ENCODE measurements at regions of chr20 and their contacts with region 1.

Region 1: GRCh38 chr20:58209652-58210397 is 18.6 kb downstream of the ANKRD60 start:
- DNase-seq: peak; percentile 92
- ATAC-seq: peak; percentile 96

Region 2: DNA sequence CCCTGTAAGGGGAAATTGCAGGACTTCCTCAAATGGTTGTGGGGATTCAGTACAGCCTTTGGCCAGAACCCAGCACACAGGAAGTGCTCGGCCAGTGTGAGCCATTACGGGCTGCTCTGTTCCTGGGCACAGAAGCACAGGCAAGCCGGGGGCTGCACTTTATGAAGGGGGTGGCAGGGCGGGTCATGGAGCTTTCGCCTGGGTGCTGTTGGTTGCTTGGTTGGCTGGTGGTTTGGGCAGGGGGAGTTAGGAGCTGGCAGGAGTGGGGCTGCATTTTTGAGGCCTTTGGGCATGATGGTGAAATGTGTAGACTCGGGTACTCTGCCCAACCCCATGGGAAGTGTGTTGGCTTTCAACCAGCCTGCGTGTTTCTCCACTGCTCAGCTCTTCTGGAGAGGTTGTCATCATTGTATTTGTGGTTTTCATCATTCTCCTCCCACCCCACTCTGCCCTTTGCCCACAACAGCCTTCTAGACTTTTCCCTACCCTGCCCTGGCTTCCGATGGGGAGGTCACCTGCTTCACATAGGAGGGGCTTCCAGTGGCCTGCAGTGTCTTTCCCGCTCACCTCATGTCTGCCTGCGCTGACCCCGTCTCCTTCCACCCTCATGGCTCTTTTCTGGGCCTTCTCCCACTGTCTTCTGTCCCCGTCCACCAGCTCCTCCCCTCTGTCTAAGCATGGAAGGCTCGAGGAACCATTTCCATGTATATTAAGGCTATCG is 834.7 kb before region 1 on chr20:
- intact Hi-C with region 1: loop called (anchors 10 kb)
- DNase-seq: peak; percentile 70
- ATAC-seq: peak; percentile 78

Region 3: GRCh38 chr20:57514273-57514751 is 695.5 kb before region 1 on chr20:
- intact Hi-C with region 1: loop called (anchors 5 kb)
- DNase-seq: peak; percentile 67
- ATAC-seq: peak; percentile 93

Region 4: DNA sequence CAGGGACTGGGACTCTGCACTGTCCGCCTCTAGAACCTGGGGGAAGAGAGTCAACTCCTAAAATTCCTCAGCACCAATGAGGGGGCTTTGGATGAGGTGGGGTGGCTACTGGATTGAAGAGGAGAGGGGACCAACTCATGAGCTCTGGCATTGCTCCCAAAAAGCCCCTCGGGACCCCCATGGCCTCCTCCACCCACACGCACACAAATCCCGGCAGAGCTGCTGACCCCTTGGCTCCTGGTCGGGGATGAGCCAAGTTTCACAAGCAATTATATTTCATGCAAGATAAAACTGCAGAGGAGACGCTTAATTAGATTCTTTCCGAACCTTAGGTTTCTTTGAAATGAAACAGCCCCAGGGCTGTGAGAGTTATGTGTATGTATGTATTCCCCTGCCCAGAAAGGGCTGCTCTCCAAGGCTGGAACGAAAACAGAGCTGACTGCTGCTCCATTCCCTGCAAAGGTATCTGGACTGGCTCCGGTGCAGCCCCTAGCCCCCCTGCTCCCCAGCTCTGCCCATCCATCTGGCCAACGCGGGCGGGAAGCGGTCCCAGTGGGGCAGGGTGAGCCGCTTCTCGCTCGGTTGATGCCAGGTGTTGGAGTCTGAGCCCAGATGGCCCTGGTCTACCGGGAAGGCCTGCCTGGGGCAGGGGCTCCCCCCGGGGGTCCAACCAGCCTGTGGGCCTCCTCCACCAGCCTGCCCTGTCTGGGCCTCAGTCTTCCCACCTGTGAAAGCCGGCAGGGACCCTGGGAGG is 394.5 kb after region 1 on chr20:
- intact Hi-C with region 1: no loop called
- DNase-seq: no peak
- ATAC-seq: no peak